MCF 10A (cell line): ENCODE measurements at regions of chr10 and their contacts with region 1.

Region 1: DNA sequence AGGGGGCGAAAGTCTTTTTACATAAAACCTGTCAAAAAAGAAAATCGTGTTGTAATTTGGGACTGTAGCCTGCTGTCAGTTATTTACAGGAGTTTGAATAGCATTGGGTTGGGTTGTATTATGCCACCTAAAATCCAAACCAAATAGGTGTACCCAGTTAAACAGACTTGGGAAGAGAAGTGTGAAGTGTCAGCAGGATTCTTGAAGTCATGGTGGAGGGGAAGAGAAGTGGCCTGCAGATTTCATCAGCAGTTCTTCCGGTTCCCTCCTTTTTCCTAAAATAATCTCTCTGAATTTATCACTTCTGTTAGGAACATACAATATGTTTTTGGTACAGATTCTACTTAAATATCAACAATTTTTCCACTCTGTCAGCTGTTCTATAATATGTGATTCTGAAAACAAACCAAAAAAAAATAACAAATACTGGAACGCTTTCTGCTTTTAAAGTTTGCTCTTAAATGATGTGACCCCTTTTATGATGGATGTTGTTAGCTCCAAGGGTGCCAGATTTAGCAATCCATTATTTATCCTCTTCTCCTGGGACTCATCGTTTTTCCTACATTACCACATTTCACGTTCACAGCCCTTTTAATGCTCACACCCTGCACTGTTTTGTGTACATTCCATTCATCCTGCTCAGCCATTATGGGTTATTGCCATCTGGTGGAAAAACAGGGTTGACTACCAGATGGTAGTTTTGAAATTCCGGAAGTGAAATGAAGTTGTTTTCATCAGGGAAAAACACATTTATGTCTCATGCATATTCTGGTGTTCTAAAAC is 18.7 kb upstream of the ARHGAP12 start:
- DNase-seq: peak; percentile 91
- H3K4me3 Mint-ChIP-seq: peak overlapping the region; percentile 15
- H3K27ac Mint-ChIP-seq: peak overlapping the region; percentile 81
- H3K4me1 Mint-ChIP-seq: peaks cover 19% of the 10 kb centered on the region
- H3K27me3 Mint-ChIP-seq: no peaks in the 10 kb centered on the region
- CTCF ChIP-seq: peak; percentile 59

Region 2: DNA sequence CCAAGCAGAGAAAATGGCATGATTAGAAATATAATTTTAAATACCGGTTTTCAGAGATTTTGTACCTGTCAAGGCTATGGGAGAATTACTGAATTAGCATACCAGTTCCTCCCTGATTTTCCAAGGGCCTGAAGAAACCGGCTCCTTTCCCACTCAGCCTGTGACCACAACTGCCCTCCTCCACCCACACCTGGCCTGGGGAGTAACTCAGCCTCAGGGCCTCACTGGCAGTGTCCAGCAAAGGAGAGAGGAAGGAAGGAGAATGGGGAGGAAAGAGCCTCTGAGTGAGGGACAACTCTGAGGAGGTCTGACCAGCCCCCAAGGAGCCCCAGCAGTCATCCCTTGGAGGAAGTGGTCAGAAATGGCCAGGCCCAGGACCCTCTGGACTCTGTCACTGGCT is 1219.8 kb before region 1 on chr10:
- CTCF ChIA-PET with region 1: no interaction called
- POLR2A ChIA-PET with region 1: no interaction called
- intact Hi-C with region 1: loop called (anchors 5 kb)
- DNase-seq: no peak
- H3K4me3 Mint-ChIP-seq: no peak overlapping the region
- H3K27ac Mint-ChIP-seq: no peak overlapping the region
- H3K4me1 Mint-ChIP-seq: no peaks in the 10 kb centered on the region
- H3K27me3 Mint-ChIP-seq: no peaks in the 10 kb centered on the region
- CTCF ChIP-seq: no peak

Region 3: DNA sequence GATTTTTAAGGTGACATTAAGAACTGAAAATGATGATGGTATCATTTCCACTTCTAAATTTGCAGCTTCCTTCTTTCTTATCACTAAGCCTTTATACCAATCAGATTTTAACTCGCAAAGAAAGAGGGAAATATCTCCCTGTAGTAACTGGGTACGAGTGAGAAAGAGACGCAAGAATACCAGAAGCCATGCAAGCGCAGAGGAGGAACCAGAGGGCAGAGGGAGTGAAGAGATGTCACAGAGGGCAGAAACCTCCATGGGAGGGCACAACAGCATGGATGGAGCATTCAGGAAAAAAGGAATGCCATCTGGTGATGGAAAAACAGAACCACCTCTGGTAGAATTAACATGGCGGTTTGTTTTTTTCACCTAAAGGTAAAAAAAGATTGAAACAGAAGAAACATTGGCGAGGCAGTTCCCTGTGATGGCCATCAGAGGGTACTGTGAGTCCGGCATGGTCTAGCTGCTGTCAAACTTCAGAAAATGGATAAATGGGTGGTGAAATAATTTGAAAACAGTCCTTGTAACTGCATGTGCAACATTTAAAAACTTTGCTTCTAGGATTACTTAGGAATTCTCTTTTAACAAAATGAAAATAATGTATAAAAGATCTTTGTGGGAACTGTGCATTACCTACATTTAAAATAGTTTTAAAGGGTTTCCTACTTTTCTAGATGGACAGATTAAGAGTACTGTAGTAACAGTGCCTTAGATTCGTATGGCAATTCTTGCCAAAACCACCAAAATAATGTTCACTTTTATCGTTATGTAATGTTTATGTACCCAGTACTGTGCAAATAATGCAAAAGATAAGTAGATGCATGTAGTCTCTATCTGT is 110.5 kb before region 1 on chr10:
- CTCF ChIA-PET with region 1: interaction called, 3 read pairs
- POLR2A ChIA-PET with region 1: interaction called, 3 read pairs
- intact Hi-C with region 1: loop called (anchors 1 kb)
- DNase-seq: peak; percentile 52
- H3K4me3 Mint-ChIP-seq: no peak overlapping the region
- H3K27ac Mint-ChIP-seq: no peak overlapping the region
- H3K4me1 Mint-ChIP-seq: peaks cover 6% of the 10 kb centered on the region
- H3K27me3 Mint-ChIP-seq: no peaks in the 10 kb centered on the region
- CTCF ChIP-seq: peak; percentile 70

Region 4: GRCh38 chr10:31999064-31999660 is 51.8 kb after region 1 on chr10:
- CTCF ChIA-PET with region 1: no interaction called
- POLR2A ChIA-PET with region 1: no interaction called
- intact Hi-C with region 1: no loop called
- DNase-seq: no peak
- H3K4me3 Mint-ChIP-seq: no peak overlapping the region
- H3K27ac Mint-ChIP-seq: no peak overlapping the region
- H3K4me1 Mint-ChIP-seq: no peaks in the 10 kb centered on the region
- H3K27me3 Mint-ChIP-seq: no peaks in the 10 kb centered on the region
- CTCF ChIP-seq: no peak